Panc1 (cell line): ENCODE measurements at regions of chr15 and their contacts with region 1.

Region 1: DNA sequence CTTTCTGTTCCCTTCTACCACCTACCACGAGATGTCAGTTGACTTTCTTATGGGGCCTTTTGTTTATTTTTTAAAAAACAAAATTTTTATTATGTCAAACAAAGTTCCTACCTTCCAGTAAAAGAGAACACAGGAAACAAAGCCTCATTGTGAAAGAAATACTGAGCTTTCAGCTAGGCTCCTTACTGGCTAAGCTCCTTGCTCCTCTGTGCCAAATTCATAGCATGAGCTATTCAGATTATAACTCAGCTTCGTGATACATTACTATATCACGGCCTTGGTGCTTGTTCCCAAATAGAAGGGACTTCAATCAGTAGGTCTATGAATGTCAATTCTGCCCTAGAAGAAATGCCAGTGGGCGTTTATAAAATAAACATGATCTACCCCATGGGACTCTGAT is 145.8 kb upstream of the CHRM5 start:
- DNase-seq: no peak
- ATAC-seq: no peak
- H3K4me3 ChIP-seq: no peak overlapping the region
- H3K27ac ChIP-seq: no peak overlapping the region
- H3K4me1 ChIP-seq: no peaks in the 10 kb centered on the region
- H3K27me3 ChIP-seq: peaks cover 2% of the 10 kb centered on the region; the same call in 1 of the 2 replicates
- CTCF ChIP-seq: no peak

Region 2: GRCh38 chr15:33700695-33701304 is 121.7 kb before region 1 on chr15:
- CTCF ChIA-PET with region 1: no interaction called
- POLR2A ChIA-PET with region 1: no interaction called
- in situ Hi-C with region 1: no loop called
- intact Hi-C with region 1: no loop called
- DNase-seq: peak; percentile 79
- ATAC-seq: peak; percentile 96
- H3K4me3 ChIP-seq: no peak overlapping the region
- H3K27ac ChIP-seq: no peak overlapping the region
- H3K4me1 ChIP-seq: no peaks in the 10 kb centered on the region
- H3K27me3 ChIP-seq: peaks cover 5% of the 10 kb centered on the region; the same call in 1 of the 2 replicates
- CTCF ChIP-seq: peak; percentile 91

Region 3: DNA sequence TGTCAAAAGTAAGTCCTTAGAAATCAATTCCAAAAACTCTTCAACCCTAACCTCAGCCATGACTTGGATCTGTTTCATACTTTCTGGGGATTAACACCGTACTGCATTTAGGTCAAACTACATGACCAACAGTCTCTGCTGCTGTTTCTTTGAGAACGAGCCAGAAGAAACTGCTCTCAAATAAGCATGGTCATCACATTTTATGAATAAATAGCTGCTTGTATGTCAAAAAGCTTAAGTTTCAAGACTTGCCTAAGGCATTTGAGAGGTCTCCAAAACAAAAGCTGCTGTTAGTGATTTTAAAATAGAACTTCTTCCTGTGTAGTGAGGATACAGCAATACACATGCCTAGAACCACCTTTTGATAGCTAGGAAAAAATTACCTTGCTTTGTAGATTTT is 20.5 kb before region 1 on chr15:
- CTCF ChIA-PET with region 1: no interaction called
- POLR2A ChIA-PET with region 1: no interaction called
- in situ Hi-C with region 1: no loop called
- intact Hi-C with region 1: no loop called
- DNase-seq: no peak
- ATAC-seq: no peak
- H3K4me3 ChIP-seq: no peak overlapping the region
- H3K27ac ChIP-seq: no peak overlapping the region
- H3K4me1 ChIP-seq: no peaks in the 10 kb centered on the region
- H3K27me3 ChIP-seq: peaks cover 9% of the 10 kb centered on the region
- CTCF ChIP-seq: no peak

Region 4: GRCh38 chr15:33848011-33848410 is 25.5 kb after region 1 on chr15:
- CTCF ChIA-PET with region 1: no interaction called
- POLR2A ChIA-PET with region 1: interaction called, 10 read pairs
- in situ Hi-C with region 1: no loop called
- intact Hi-C with region 1: no loop called
- DNase-seq: no peak
- ATAC-seq: no peak
- H3K4me3 ChIP-seq: no peak overlapping the region
- H3K27ac ChIP-seq: no peak overlapping the region
- H3K4me1 ChIP-seq: no peaks in the 10 kb centered on the region
- H3K27me3 ChIP-seq: 0 out of 2 replicates have a peak, but pooled peaks cover 2% of the 10 kb centered on the region
- CTCF ChIP-seq: no peak